HepG2 (cell line): ENCODE measurements at regions of chr6 and their contacts with region 1.

Region 1: GRCh38 chr6:144013486-144013909 is 5.4 kb upstream of the PLAGL1 start:
- DNase-seq: peak; percentile 81
- ATAC-seq: peak; percentile 79
- H3K4me3 ChIP-seq: no peak overlapping the region
- H3K27ac ChIP-seq: no peak overlapping the region
- H3K4me1 ChIP-seq: 0 out of 2 replicates have a peak, but pooled peaks cover 2% of the 10 kb centered on the region
- H3K27me3 ChIP-seq: peaks cover 2% of the 10 kb centered on the region in 2 experiments; a peak in 3 of 5 replicates
- CTCF ChIP-seq: peak; percentile 95
- EP300 ChIP-seq: no peak
- POLR2A ChIP-seq: no peak
- RAD21 ChIP-seq: peak; percentile 94

Region 2: GRCh38 chr6:143592335-143592734 is 421.2 kb before region 1 on chr6:
- CTCF ChIA-PET with region 1: interaction called, 3 read pairs
- POLR2A ChIA-PET with region 1: no interaction called
- in situ Hi-C with region 1: no loop called
- intact Hi-C with region 1: loop called (anchors 5 kb)
- DNase-seq: peak; percentile 23
- ATAC-seq: peak; percentile 68
- H3K4me3 ChIP-seq: no peak overlapping the region
- H3K27ac ChIP-seq: no peak overlapping the region
- H3K4me1 ChIP-seq: no peaks in the 10 kb centered on the region
- H3K27me3 ChIP-seq: no peaks in the 10 kb centered on the region
- CTCF ChIP-seq: peak; percentile 62
- EP300 ChIP-seq: no peak
- POLR2A ChIP-seq: no peak
- RAD21 ChIP-seq: no peak

Region 3: DNA sequence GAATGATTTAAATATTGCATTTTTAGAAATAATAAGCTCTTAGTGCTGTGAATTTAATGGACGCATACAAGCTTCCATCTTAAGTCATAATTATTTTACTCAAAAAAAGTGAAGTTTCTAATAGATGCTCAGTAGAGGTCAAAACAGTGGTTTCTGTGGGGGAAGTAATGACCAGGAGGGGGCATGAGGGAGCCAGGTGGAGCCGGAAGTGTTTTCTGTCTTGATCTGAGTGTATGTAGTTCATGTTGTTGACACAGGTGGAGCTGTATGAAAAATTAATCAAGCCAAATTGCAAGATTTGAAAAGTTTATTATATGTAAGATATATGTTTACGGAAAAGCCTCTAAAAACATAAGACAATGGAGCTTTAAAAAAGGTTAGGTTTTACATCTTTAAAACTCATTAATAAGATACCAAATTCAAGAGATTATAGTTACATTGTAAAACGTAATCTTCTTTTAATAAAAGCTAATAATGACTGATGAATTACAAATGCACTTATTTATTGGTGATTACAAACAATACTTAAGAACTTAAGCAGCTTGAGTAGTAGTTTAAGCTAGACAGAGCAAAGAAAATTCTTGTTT is 73.4 kb before region 1 on chr6:
- CTCF ChIA-PET with region 1: interaction called, 59 read pairs
- POLR2A ChIA-PET with region 1: no interaction called
- in situ Hi-C with region 1: loop called (anchors 5 kb)
- intact Hi-C with region 1: loop called (anchors 1 kb)
- DNase-seq: peak; percentile 59
- ATAC-seq: peak; percentile 74
- H3K4me3 ChIP-seq: no peak overlapping the region
- H3K27ac ChIP-seq: no peak overlapping the region
- H3K4me1 ChIP-seq: peaks cover 16% of the 10 kb centered on the region
- H3K27me3 ChIP-seq: no peaks in the 10 kb centered on the region
- CTCF ChIP-seq: peak; percentile 63
- EP300 ChIP-seq: no peak
- POLR2A ChIP-seq: no peak
- RAD21 ChIP-seq: peak; percentile 38; the same call in 1 of the 2 replicates

Region 4: GRCh38 chr6:144027932-144028587 is 14.6 kb after region 1 on chr6:
- CTCF ChIA-PET with region 1: no interaction called
- POLR2A ChIA-PET with region 1: no interaction called
- in situ Hi-C with region 1: no loop called
- intact Hi-C with region 1: no loop called
- DNase-seq: no peak
- ATAC-seq: no peak
- H3K4me3 ChIP-seq: no peak overlapping the region
- H3K27ac ChIP-seq: no peak overlapping the region
- H3K4me1 ChIP-seq: no peaks in the 10 kb centered on the region; the same call in 1 of the 2 replicates
- H3K27me3 ChIP-seq: no peaks in the 10 kb centered on the region
- CTCF ChIP-seq: no peak
- EP300 ChIP-seq: no peak
- POLR2A ChIP-seq: no peak
- RAD21 ChIP-seq: no peak